ENCODE measurements at regions of chr2 and their contacts with region 1.

Region 1: DNA sequence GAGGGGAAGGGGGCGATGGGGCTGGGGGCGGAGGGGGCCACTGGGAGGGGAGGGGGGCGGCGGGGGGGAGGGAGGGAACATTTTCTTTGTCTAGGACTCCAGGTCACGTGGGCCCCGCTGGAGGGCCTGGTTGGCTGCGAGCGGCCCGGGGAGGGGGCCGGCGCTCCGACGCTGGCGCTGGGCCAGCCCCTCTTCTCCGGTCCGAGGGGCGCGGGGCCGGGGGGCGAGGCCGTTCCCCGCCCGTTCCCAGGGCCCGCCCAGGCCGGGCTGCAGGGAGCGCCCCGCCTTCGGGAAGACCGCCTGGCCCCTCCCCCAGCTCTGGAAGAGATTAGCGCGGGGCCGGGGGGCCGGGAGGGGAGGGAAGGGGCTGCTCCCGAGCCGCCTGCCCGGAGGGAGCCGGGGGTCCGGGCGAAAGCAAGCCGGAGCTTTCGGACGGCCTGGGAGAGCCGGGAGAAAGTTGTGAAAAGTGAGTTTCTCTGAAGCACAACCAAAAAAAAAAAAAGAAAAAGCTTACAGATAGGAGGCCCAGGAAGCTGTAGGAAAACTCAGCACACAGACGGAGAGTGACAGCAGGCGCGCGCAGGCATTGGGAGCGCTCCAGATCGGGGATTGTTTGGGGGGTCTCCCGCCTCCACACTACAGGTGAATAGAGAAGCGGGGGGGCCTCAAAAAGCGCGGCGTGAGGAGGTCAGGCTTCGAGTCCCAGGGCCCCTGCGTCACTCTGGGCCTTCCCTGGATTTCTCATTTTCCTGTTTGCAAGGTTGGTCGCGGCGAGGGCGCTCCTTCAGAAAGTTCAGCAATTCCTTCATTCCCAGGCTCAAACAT is 84.1 kb upstream of the POMC start:
- DNase-seq: peak in 13 of 14 experiments; percentile 39 to 80 (median 57)
- ATAC-seq: peak; percentile 69
- H3K4me3 ChIP-seq: peak overlapping the region; percentile 80
- H3K4me3 Mint-ChIP-seq: peak overlapping the region; percentile 69
- H3K27ac ChIP-seq: peak overlapping the region; percentile 58 to 64
- H3K27ac Mint-ChIP-seq: peak overlapping the region; percentile 90
- H3K4me1 ChIP-seq: peaks cover 36% of the 10 kb centered on the region
- H3K4me1 Mint-ChIP-seq: peaks cover 47% of the 10 kb centered on the region
- H3K27me3 ChIP-seq: no peaks in the 10 kb centered on the region
- H3K27me3 Mint-ChIP-seq: no peaks in the 10 kb centered on the region
- CTCF ChIP-seq: no peak

Region 2: GRCh38 chr2:25098670-25099486 is 153.6 kb before region 1 on chr2:
- CTCF ChIA-PET with region 1: no interaction called
- POLR2A ChIA-PET with region 1: no interaction called
- intact Hi-C with region 1: no loop called
- DNase-seq: no peak
- ATAC-seq: no peak
- H3K4me3 ChIP-seq: no peak overlapping the region
- H3K4me3 Mint-ChIP-seq: no peak overlapping the region
- H3K27ac ChIP-seq: no peak overlapping the region
- H3K27ac Mint-ChIP-seq: no peak overlapping the region
- H3K4me1 ChIP-seq: no peaks in the 10 kb centered on the region
- H3K4me1 Mint-ChIP-seq: no peaks in the 10 kb centered on the region
- H3K27me3 ChIP-seq: no peaks in the 10 kb centered on the region
- H3K27me3 Mint-ChIP-seq: no peaks in the 10 kb centered on the region
- CTCF ChIP-seq: no peak

Region 3: DNA sequence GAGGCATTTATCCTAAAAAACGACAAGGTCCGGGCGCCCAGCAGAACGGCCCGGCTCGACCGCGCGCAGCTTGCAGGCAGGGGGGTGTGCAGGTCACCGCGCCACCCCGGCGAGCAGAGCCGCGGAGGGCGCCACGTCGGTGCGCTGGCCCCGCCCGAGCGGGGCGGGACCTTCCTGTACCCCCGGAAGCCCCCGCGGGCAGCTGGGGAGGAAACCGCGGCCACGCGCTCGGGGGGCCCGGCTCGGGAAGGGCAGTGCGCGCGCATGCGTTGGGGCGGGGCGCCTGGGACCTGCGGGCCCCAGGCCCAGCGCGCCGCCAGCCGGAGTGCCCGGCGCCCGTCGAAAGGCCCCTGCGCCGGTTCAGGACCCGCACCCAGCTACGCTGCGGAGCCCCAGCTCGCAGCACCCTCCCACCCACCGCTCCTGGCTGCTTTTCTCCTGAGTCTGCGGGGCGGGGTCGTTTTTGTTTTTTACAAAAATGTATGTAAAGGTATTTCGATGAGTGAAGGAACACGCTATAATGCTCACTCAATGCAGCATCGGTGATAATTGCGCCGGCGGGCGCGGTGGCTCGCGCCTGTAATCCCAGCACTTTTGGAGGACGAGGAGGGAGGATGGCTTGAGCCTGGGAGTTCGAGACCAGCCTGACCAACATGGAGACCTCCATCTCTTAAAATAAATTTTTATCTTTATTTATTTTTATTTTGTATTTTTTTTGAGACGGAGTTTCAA is 36.4 kb before region 1 on chr2:
- CTCF ChIA-PET with region 1: no interaction called
- POLR2A ChIA-PET with region 1: interaction called, 5 read pairs
- intact Hi-C with region 1: loop called in 1 of 2 experiments (anchors 2 kb)
- DNase-seq: peak; percentile 62 to 92 (median 86)
- ATAC-seq: peak; percentile 90
- H3K4me3 ChIP-seq: peak overlapping the region; percentile 70
- H3K4me3 Mint-ChIP-seq: peak overlapping the region; percentile 87
- H3K27ac ChIP-seq: peak overlapping the region; percentile 52 to 76
- H3K27ac Mint-ChIP-seq: peak overlapping the region; percentile 85
- H3K4me1 ChIP-seq: peaks cover 21% of the 10 kb centered on the region
- H3K4me1 Mint-ChIP-seq: peaks cover 18% of the 10 kb centered on the region
- H3K27me3 ChIP-seq: no peaks in the 10 kb centered on the region
- H3K27me3 Mint-ChIP-seq: no peaks in the 10 kb centered on the region
- CTCF ChIP-seq: no peak

Region 4: DNA sequence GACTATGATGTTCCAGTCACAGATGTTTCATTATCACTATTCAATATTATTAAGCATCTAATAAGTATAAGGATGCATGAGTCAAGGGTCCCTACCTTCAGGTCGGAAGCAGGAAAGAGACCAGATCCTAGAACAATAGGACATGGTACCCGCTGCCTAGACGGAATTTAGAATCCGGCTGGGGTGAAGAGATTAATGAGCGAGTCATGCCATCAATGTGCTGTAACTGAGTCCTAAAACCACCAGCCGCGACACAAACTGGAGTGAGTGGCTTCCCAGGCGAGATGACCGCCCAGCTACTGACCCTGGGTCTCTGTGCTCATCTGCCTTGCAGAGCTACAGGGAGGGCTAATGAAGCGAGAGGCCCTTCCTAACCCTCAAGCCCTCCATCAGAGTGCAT is 15.6 kb after region 1 on chr2:
- CTCF ChIA-PET with region 1: no interaction called
- POLR2A ChIA-PET with region 1: interaction called, 84 read pairs
- intact Hi-C with region 1: loop called (anchors 2 kb)
- DNase-seq: no peak
- ATAC-seq: no peak
- H3K4me3 ChIP-seq: no peak overlapping the region
- H3K4me3 Mint-ChIP-seq: no peak overlapping the region
- H3K27ac ChIP-seq: no peak overlapping the region
- H3K27ac Mint-ChIP-seq: peak overlapping the region; percentile 36
- H3K4me1 ChIP-seq: peaks cover 67% of the 10 kb centered on the region
- H3K4me1 Mint-ChIP-seq: peaks cover 44% of the 10 kb centered on the region
- H3K27me3 ChIP-seq: no peaks in the 10 kb centered on the region
- H3K27me3 Mint-ChIP-seq: no peaks in the 10 kb centered on the region
- CTCF ChIP-seq: no peak

Region 5: DNA sequence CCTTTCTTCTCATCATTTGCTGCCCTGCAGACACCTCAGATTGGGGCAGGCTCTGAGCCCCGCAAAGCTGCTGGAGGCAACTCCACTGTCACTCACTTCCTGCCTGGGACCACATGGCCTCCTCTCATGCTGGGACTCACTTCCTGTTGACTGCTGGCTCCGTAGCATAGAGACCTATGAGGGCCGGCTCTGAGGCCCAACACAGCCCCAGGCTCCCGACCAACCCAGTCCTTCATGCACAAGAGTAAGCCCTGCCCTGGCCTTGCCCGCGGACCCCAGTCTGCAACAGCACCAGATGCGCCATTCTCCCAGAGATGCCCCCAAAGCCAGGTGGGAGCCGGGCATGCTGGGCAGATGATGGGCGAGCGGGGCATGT is 33.5 kb after region 1 on chr2:
- CTCF ChIA-PET with region 1: no interaction called
- POLR2A ChIA-PET with region 1: interaction called, 14 read pairs
- intact Hi-C with region 1: loop called in 1 of 2 experiments (anchors 5 kb)
- DNase-seq: peak; percentile 43 to 87 (median 72)
- ATAC-seq: peak; percentile 99
- H3K4me3 ChIP-seq: no peak overlapping the region
- H3K4me3 Mint-ChIP-seq: peak overlapping the region; percentile 80
- H3K27ac ChIP-seq: peak overlapping the region; percentile 80 to 87
- H3K27ac Mint-ChIP-seq: peak overlapping the region; percentile 99
- H3K4me1 ChIP-seq: peaks cover 69% of the 10 kb centered on the region
- H3K4me1 Mint-ChIP-seq: peaks cover 57% of the 10 kb centered on the region
- H3K27me3 ChIP-seq: no peaks in the 10 kb centered on the region
- H3K27me3 Mint-ChIP-seq: no peaks in the 10 kb centered on the region
- CTCF ChIP-seq: no peak

Region 6: DNA sequence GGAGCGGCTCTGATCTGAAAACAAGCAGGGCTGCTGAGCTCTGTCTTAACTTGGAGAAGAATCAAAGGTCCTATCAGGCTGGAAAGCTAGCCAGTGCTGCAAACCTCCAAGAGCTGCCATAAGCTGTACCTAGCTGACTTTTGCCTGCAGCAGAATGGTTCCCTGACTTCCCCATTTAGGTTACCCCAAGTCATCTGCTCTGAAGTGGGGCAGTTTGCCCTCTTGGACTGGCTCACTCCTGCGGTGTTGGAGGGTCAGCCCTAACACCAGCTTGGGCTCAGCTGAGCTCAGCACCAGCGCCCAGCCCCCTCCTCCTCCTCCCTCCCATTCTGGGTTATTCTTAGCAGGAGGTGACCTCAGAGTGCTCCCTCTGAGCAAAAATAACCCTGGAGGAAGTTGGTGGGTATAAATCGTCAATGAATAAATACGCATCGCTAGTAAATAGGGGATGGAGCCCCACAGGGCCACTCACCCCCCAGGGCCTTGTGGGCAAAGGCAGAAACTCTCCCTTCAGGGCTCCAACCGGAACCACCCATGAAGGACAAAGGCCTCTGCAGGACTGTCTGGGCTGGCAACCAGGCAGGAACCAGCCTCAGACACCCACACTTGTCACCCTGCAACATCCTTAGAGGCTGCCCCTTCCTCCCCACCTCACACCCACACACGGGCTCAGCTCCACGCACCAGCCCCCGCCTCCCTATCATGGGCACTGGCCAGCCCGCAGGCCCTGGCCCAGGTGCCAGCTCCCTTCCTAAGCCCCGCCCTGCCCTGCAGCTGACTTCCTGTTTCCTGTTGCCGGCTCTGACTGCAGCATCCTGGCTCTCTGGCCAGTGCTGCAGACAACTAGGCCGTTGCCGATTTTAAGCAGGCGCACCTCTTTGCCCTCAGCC is 42.3 kb after region 1 on chr2:
- CTCF ChIA-PET with region 1: no interaction called
- POLR2A ChIA-PET with region 1: interaction called, 22 read pairs
- intact Hi-C with region 1: no loop called
- DNase-seq: peak; percentile 54 to 93 (median 76)
- ATAC-seq: peak; percentile 87
- H3K4me3 ChIP-seq: peak overlapping the region; percentile 40
- H3K4me3 Mint-ChIP-seq: peak overlapping the region; percentile 88
- H3K27ac ChIP-seq: peak overlapping the region; percentile 90 to 91
- H3K27ac Mint-ChIP-seq: peak overlapping the region; percentile 99
- H3K4me1 ChIP-seq: peaks cover 68% of the 10 kb centered on the region
- H3K4me1 Mint-ChIP-seq: peaks cover 44% of the 10 kb centered on the region
- H3K27me3 ChIP-seq: no peaks in the 10 kb centered on the region
- H3K27me3 Mint-ChIP-seq: no peaks in the 10 kb centered on the region
- CTCF ChIP-seq: no peak

Measured in CD4-positive, alpha-beta T cell (primary cell).